Stomach (tissue), 19 donors: ENCODE measurements at regions of chr11 and their contacts with region 1.

Region 1: DNA sequence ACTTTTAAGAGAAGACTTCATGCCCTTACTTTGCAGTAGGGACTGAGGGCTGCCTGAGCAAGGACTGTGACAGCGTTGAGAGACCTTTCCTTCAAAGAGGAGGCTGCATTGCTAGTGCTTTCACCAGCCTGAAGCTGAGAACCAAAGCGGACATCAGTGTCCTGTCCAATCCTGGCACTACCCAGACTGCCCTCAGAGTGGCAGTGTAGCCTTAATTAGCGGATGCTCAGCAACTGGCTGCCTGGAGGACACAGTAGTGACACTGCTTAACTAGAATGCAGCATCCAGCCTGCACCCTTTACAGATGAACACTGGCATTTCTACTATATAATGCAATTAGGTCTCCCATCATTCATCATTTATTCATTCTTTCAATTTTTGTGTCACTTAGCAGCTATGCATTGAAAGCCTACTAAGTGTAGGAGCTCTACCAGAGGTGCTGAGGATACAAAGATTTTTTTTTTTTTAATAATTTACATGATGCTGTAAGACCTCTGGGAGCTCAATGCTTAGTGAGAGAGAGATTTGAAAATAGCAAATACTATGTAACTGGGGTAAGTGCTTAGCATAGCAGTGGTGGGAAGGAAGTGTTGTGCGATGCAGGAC is 36.9 kb upstream of the SLC36A4 start:
- DNase-seq: peak; percentile 81 to 93
- H3K4me3 ChIP-seq: no peak overlapping the region
- H3K27ac ChIP-seq: no peak overlapping the region
- H3K4me1 ChIP-seq: peaks cover 0 to 6% (median 0%) of the 10 kb centered on the region in 4 donors
- H3K27me3 ChIP-seq: peaks cover 0 to 5% (median 0%) of the 10 kb centered on the region in 3 donors
- CTCF ChIP-seq: peak in 5 of 7 experiments; percentile 80 to 96 (median 87)
- EP300 ChIP-seq: no peak
- POLR2A ChIP-seq: no peak

Region 2: DNA sequence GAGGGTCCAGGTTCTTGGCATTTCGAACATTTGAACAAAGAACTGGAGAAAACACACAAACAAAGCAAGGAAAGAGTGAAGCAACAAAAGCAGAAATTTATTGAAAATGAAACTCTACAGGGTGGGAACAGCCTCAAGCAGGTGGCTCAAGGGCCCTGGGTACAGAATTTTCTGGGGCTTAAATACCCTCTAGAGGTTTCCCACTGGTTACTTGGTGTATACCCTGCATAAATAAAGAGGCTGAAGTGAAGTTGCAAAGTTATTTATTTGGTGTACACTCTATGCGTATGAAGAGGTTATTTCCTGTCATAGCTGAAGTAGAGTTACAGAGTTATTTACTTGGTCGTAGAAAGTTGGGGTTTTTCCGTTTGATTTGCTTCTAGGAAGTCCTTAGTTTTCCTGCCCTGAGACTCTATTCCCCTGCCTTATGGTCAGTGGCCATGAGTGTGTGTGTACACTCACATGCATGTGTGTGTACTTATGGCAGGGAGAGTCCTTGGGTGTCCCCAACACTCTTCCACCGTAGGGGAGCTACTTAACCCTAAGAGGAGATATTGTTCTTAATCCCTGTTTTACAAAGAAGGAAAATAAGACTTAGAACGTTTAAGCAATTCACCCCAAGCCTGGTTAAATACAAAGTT is 314.1 kb after region 1 on chr11:
- intact Hi-C with region 1: loop called (anchors 5 kb)
- DNase-seq: no peak
- H3K4me3 ChIP-seq: no peak overlapping the region
- H3K27ac ChIP-seq: no peak overlapping the region
- H3K4me1 ChIP-seq: peaks cover 2 to 8% (median 4%) of the 10 kb centered on the region in 4 donors
- H3K27me3 ChIP-seq: no peaks in the 10 kb centered on the region
- CTCF ChIP-seq: no peak
- EP300 ChIP-seq: no peak
- POLR2A ChIP-seq: no peak

Region 3: GRCh38 chr11:93652161-93652597 is 417.5 kb after region 1 on chr11:
- intact Hi-C with region 1: loop called (anchors 5 kb)
- DNase-seq: peak in 1 of 2 donors; percentile 65
- H3K4me3 ChIP-seq: no peak overlapping the region
- H3K27ac ChIP-seq: no peak overlapping the region
- H3K4me1 ChIP-seq: peaks cover 0 to 8% (median 4%) of the 10 kb centered on the region in 4 donors
- H3K27me3 ChIP-seq: no peaks in the 10 kb centered on the region
- CTCF ChIP-seq: peak in 4 of 7 experiments; percentile 49 to 94 (median 66)
- EP300 ChIP-seq: no peak
- POLR2A ChIP-seq: no peak